Endothelial cell of umbilical vein (primary cell): ENCODE measurements at regions of chr1 and their contacts with region 1.

Region 1: DNA sequence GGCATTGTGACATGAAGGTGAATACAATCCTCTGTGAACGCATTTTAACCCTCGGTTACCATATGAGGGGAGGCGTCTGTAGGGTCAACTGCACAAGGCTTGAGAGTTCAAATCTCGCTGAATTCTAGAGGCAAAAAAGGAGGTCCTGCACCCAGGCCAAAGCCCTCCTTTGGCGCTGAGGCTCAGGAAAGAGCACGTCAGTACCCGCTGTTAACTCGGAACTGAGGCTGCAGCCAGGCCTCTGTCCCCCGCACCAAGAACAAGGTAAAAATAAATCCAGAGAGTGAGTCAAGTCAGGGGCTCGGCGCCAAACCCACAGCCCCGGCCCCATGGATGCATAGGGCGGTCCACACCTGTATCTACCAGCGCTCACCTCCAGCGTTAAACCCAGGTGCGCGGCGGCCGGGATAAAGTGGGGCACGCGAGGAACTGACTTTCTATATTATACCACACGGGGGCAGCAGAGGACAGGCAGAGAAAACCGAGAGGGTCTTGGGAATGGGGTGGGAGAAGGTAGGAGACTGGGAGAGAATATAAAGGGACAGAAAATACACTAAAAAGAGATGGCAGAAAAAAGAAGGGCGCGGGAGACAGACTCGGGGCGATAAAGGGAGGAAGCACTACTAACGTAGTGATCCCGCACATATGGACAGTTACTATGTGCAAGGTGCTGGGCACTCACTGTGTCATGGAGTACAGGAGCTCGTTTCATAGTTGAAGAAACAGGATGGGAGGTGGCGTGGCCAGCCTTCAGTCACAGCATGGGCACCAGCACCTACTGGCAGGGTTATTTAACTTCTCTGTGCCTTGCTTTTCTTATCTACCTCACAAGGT is 54.8 kb downstream of the DMRTA2 start:
- DNase-seq: peak; percentile 26
- H3K4me3 ChIP-seq: no peak overlapping the region
- H3K27ac ChIP-seq: no peak overlapping the region
- H3K4me1 ChIP-seq: no peaks in the 10 kb centered on the region
- H3K27me3 ChIP-seq: peaks cover 11 to 15% of the 10 kb centered on the region in 2 experiments
- CTCF ChIP-seq: peak; percentile 51 to 62
- POLR2A ChIP-seq: no peak

Region 2: GRCh38 chr1:50735443-50735842 is 367.0 kb after region 1 on chr1:
- CTCF ChIA-PET with region 1: interaction called, 11 read pairs
- POLR2A ChIA-PET with region 1: no interaction called
- dilution Hi-C with region 1: no loop called
- intact Hi-C with region 1: loop called (anchors 1 kb)
- DNase-seq: peak; percentile 38
- H3K4me3 ChIP-seq: no peak overlapping the region
- H3K27ac ChIP-seq: no peak overlapping the region
- H3K4me1 ChIP-seq: no peaks in the 10 kb centered on the region
- H3K27me3 ChIP-seq: no peaks in the 10 kb centered on the region
- CTCF ChIP-seq: peak; percentile 20 to 23
- POLR2A ChIP-seq: no peak

Region 3: DNA sequence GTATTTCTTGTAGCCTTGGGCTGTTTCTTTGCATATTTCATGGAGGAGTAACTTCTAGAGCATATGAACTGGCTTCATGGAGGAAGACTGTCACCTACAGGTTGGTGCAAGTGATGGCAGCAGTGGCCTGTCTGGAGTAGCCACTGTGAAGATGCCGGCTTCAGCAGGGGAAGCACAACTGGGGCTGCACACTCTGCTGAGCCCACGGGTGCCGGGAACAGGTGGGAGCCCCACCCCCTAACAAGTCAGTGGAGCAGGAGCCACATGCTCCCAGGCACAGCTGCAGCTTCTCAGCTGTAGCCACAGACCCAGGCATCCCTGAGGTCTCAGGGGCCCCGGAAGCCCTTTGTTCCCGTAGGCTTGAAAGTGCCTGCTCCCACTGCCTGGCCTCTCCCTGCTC is 690.5 kb after region 1 on chr1:
- CTCF ChIA-PET with region 1: no interaction called
- POLR2A ChIA-PET with region 1: no interaction called
- dilution Hi-C with region 1: no loop called
- intact Hi-C with region 1: loop called (anchors 10 kb)
- DNase-seq: peak; percentile 9
- H3K4me3 ChIP-seq: no peak overlapping the region
- H3K27ac ChIP-seq: no peak overlapping the region
- H3K4me1 ChIP-seq: peaks cover 17% of the 10 kb centered on the region
- H3K27me3 ChIP-seq: peaks cover 0 to 2% of the 10 kb centered on the region in 2 experiments
- CTCF ChIP-seq: peak; percentile 21 to 55
- POLR2A ChIP-seq: no peak

Region 4: GRCh38 chr1:51549016-51549619 is 1180.7 kb after region 1 on chr1:
- CTCF ChIA-PET with region 1: no interaction called
- POLR2A ChIA-PET with region 1: no interaction called
- dilution Hi-C with region 1: no loop called
- intact Hi-C with region 1: loop called (anchors 5 kb)
- DNase-seq: peak; percentile 74
- H3K4me3 ChIP-seq: no peak overlapping the region
- H3K27ac ChIP-seq: peak overlapping the region; percentile 10
- H3K4me1 ChIP-seq: peaks cover 21% of the 10 kb centered on the region
- H3K27me3 ChIP-seq: no peaks in the 10 kb centered on the region
- CTCF ChIP-seq: no peak
- POLR2A ChIP-seq: peak; percentile 27